ENCODE measurements at regions of chr12 and their contacts with region 1.

Region 1: DNA sequence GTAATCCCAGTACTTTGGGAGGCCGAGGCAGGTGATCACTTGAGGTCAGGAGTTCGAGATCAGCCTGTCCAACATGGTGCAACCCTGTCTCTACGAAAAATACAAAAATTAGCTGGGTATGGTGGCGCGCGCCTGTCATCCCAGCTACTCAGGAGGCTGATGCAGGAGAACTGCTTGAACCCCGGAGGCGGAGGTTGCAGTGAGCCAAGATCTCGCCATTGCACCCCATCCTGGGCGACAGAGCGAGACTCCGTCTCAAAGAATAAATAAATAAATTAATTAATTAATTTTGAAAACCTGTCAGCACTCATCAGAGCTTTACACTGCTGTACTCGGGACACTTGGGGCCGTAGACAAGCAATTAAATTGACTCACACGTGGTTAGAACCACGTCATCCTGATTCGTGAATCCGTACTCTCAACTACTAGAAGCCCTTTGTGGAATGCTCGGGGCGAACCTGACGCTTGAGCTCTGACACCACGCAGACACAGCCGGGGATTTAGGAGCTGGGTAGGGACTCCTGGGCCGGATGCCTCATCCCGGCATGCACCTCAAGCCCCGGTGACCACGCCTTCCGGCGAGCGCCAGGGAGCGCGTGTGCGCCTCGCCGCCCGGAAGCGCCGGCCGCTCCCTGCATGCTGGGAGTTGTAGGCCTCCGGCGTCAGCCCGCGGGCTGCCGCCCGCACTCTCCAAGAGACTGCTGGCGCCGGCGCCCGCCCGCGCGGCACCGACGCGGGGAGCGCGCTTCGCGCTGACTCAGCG is at the start of gene XPOT:
- DNase-seq: peak; percentile 97 to 98
- ATAC-seq: peak; percentile 97
- H3K4me3 ChIP-seq: peak within 1 kb of the TSS; percentile 31 to 83
- H3K27ac ChIP-seq: peak within 1 kb of the TSS; percentile 73 to 89
- H3K4me1 ChIP-seq: no peaks in the 10 kb centered on the region
- H3K27me3 ChIP-seq: no peaks in the 10 kb centered on the region
- total RNA-seq, gene XPOT: 49.7 to 53.9 TPM

Region 2: DNA sequence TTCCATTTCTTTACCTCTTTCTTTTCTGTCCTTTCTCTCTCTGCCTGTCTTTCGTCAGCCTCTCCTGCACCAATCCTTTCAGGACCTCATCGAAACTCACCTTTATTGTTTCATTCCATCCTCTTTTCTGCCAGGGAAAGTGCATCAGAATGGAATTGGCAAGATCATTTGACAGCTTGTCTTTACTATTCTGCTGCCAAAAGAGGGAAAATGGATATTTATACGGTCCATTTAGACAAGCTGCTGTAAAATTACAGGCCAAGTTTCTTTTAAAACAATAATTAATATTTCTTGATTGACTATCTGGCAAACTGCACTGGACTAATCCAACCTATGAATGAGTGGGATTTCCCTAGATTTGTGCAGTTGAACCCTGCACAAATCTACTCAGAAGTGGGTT is 567.0 kb before region 1 on chr12:
- intact Hi-C with region 1: loop called (anchors 10 kb)
- DNase-seq: no peak
- ATAC-seq: no peak
- H3K4me3 ChIP-seq: no peak overlapping the region
- H3K27ac ChIP-seq: no peak overlapping the region
- H3K4me1 ChIP-seq: no peaks in the 10 kb centered on the region
- H3K27me3 ChIP-seq: no peaks in the 10 kb centered on the region

Region 3: GRCh38 chr12:64451687-64452558 is 48.0 kb after region 1 on chr12 and contains the start of gene TBK1:
- intact Hi-C with region 1: loop called in 1 of 2 experiments (anchors 5 kb)
- DNase-seq: peak; percentile 94 to 97
- ATAC-seq: peak; percentile 97
- H3K4me3 ChIP-seq: peak within 1 kb of the TSS; percentile 24 to 96
- H3K27ac ChIP-seq: peak within 1 kb of the TSS; percentile 79 to 92
- H3K4me1 ChIP-seq: no peaks in the 10 kb centered on the region
- H3K27me3 ChIP-seq: no peaks in the 10 kb centered on the region
- total RNA-seq, gene TBK1: 25.9 to 32.8 TPM

Region 4: GRCh38 chr12:64522316-64522715 is 118.4 kb after region 1 on chr12:
- intact Hi-C with region 1: no loop called
- DNase-seq: no peak
- ATAC-seq: no peak
- H3K4me3 ChIP-seq: no peak overlapping the region
- H3K27ac ChIP-seq: no peak overlapping the region
- H3K4me1 ChIP-seq: no peaks in the 10 kb centered on the region
- H3K27me3 ChIP-seq: no peaks in the 10 kb centered on the region

Region 5: GRCh38 chr12:64583771-64584421 is 180.0 kb after region 1 on chr12:
- intact Hi-C with region 1: no loop called
- DNase-seq: no peak
- ATAC-seq: no peak
- H3K4me3 ChIP-seq: no peak overlapping the region
- H3K27ac ChIP-seq: no peak overlapping the region
- H3K4me1 ChIP-seq: peaks cover 0 to 5% of the 10 kb centered on the region in 2 donors
- H3K27me3 ChIP-seq: no peaks in the 10 kb centered on the region